Activated T-helper 2 cell treated with anti-CD3 and anti-CD28 coated beads, Interferon-gamma antibody, Interleukin-2, Interleukin-4, amounts not matched to agents 10 μg/mL and 5 μg/mL and 100 μg/mL, durations not matched to agents 14 hours and 24 hours and 36 hours (primary cell): ENCODE measurements at regions of chr14 and their contacts with region 1.

Region 1: DNA sequence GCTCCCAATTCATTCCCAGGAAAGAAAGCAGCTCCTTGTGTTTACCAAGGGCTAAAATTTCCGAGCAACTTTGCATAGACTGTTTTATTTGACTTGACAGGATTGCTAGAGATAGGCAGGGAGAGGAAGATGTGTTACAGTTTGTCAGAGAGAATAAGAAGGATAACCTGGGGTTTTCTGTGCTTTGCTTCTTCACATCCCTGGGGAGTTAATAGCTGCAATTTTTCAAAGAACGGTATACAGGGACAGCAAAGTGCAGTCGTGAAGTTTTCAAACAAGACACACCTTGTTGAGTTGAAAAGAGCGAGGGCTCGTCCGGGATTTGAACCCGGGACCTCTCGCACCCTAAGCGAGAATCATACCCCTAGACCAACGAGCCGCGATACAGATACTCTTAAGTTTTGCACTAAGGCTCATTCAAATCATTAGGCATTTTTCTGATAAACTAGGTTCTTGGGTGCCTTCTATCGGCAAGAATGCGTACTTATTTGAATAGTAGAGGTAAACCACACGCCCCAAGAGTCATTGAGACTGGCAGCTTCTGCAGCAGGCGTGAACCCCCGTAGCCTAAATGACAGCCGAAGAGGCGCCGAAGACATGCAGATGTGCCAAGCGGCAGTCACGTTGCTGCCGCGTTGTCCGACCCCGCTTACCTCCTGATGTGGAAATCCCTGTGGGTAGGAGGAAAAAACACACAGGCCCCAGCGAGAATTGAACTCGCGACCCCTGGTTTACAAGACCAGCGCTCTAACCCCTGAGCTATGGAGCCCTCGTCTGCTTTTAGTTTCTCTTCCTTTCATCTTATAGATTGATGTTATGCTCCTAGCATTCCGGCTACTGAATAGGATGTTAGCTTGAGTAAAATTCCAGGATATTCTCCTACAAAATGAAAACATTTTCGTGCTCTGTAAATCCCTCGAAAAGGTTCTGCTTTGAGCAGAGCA is 22.2 kb upstream of the RNASE12 start:
- DNase-seq: peak; percentile 83
- H3K4me3 Mint-ChIP-seq: no peak overlapping the region
- H3K27ac Mint-ChIP-seq: no peak overlapping the region
- H3K4me1 Mint-ChIP-seq: peaks cover 14% of the 10 kb centered on the region
- H3K27me3 Mint-ChIP-seq: peaks cover 2% of the 10 kb centered on the region

Region 2: DNA sequence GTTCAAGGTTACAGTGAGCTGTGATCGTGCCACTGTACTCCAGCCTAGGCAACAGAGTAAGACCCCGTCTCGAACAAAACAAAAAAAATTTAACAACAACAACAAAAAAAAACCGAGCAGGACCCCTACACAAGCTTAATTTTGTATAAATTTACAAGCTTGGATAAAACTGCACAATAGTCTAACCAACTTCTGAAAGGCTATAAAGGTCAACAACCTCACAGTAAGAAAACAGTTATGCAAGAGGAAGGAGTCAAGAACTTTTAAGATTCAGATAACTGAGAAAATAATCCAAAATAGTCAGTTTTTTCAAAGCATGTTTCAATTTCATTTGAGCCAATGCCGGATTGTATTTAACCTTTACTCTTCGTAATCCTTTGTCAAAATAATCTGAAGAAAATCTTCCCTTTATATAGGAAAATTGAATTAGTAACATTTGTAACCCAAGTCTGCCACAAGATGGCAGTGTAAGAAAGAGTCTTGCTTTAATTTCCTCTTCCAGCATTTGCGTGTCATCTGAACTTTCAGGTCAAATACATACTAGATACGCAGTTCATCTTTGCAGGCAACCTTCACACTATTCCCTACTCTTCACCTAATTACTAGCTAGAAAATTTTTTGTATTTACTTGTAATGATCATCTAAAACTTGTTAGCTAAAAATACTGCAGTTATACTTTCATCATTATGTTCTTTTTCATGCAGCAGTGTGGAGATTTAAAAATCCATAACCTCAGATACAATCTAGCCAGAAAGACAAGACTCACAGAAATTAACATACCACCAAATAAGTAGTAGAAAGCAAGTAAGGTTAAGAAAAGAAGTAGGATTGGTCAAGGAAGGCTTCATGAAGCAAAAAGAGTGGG is 286.1 kb before region 1 on chr14:
- intact Hi-C with region 1: loop called (anchors 1 kb)
- DNase-seq: no peak
- H3K4me3 Mint-ChIP-seq: peak overlapping the region; percentile 5
- H3K27ac Mint-ChIP-seq: peak overlapping the region; percentile 44
- H3K4me1 Mint-ChIP-seq: peaks cover 39% of the 10 kb centered on the region
- H3K27me3 Mint-ChIP-seq: no peaks in the 10 kb centered on the region

Region 3: GRCh38 chr14:20343092-20343861 is 270.1 kb before region 1 on chr14 and contains the start of gene PARP2:
- intact Hi-C with region 1: loop called (anchors 1 kb)
- DNase-seq: peak; percentile 94
- H3K4me3 Mint-ChIP-seq: peak within 1 kb of the TSS; percentile 98
- H3K27ac Mint-ChIP-seq: peak within 1 kb of the TSS; percentile 94
- H3K4me1 Mint-ChIP-seq: peaks cover 13% of the 10 kb centered on the region
- H3K27me3 Mint-ChIP-seq: peaks cover 3% of the 10 kb centered on the region
- total RNA-seq, gene PARP2: 31.2 and 31.5 TPM in 2 replicates

Region 4: DNA sequence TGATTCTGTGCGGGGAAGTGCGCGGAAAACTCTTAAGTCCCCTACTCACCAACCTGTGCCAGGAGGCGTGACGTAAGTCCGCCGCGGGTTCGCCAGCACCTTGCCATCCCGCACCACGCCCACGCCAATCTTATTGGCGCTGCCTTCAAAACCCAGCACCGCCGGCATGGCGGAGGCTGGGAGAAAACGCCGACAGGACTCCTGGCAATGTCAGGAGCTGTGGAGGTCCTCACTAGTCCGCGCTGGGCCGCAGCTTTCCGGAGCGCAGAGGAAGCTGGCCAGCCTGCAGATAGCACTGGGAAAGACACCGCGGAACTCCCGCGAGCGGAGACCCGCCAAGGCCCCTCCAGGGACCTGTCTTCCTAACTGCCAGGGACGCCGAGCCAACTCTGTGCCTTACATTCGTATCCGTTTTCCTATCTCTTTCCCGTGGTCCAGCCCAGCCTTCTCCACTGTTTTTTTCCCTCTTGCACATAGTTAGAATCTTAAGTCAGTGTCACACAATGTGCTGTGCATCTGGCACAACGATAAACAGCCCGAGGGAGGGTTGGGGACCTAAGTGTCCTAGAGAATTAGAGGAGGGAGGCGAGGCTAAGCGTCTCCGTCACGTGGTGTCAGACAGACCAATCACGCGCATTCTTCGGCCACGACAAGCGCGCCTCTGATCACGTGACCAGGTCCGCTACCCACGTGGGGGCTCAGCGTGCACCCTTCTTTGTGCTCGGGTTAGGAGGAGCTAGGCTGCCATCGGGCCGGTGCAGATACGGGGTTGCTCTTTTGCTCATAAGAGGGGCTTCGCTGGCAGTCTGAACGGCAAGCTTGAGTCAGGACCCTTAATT is 158.6 kb before region 1 on chr14 and contains the starts of genes APEX1 and OSGEP:
- intact Hi-C with region 1: loop called (anchors 2 kb)
- DNase-seq: peak; percentile 97
- H3K4me3 Mint-ChIP-seq: peak within 1 kb of the TSS; percentile 63
- H3K27ac Mint-ChIP-seq: no peak within 1 kb of the TSS
- H3K4me1 Mint-ChIP-seq: peaks cover 11% of the 10 kb centered on the region
- H3K27me3 Mint-ChIP-seq: no peaks in the 10 kb centered on the region
- total RNA-seq, gene APEX1: 217 and 228 TPM in 2 replicates
- total RNA-seq, gene OSGEP: 66.0 and 66.5 TPM in 2 replicates

Region 5: DNA sequence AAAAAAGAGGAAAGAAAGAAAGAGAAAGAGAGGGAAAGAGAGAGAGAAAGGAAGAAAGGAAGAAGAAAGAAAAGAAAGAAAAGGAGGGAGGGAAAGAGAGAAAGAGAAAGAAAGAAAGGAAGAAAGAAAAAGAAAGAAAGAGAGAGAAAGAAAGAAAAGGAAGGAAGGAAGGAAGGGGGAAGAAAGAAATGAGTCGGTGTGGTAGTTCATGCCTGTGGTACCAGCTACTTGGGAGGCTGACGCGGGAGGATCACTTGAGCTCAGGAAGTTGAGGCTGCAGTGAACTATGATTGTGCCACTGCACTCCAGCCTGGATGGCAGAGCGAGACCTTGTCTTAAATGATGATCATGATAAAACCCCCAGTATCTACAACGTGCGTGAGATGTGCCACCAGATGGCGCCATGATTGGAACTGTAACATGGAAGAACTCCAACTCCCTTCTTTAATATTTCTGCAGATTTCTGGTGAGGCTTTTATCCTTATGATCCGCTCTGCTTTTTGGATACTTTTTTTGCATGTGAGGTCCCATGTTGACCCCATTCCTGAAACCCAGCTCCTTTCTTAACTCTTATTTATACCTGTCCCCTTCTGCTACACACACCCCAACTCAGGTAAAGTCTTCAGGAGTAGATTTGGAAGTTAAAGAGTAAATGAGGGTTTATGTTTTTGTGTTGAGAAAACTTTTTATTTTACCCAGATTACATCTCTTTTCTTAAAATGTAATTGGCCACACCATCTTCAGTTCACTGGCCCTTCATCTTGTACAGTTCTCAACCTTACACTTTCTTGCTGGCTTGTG is 82.4 kb before region 1 on chr14:
- intact Hi-C with region 1: loop called (anchors 1 kb)
- DNase-seq: peak; percentile 56
- H3K4me3 Mint-ChIP-seq: no peak overlapping the region
- H3K27ac Mint-ChIP-seq: no peak overlapping the region
- H3K4me1 Mint-ChIP-seq: peaks cover 8% of the 10 kb centered on the region
- H3K27me3 Mint-ChIP-seq: peaks cover 33% of the 10 kb centered on the region

Region 6: DNA sequence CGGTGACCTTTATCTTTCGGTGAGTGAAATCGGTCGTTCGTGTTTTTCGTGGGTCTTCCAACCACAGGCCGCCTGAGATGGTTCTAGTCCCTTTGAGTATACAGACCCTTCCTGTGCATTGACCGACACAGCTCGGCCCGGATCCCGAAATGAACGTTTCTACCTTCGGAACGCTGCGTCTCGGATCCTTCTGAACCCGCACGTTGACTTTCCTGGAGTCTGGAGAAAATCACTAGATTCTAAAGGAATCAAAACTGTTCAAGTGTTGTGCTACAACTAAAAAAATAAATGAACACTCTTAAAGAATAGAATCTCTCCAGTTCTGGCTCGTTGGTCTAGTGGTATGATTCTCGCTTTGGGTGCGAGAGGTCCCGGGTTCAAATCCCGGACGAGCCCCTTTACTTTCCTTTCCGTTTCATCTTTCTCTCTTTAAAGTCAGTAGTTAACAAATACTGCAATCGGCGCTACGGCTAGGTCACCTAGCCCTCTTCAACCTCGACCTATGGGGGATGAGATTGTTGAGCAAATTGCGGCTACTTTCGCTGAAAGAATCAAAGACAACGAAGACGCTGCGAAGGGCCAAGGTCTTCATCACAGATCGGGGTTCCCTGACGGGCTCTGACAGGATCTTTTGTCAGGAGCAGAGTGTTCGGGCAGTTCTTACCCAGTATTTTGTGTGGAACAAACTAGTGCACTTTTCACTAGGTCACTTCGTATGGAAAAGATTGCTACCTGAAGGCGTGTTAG is 19.5 kb after region 1 on chr14:
- intact Hi-C with region 1: loop called (anchors 1 kb)
- DNase-seq: peak; percentile 63
- H3K4me3 Mint-ChIP-seq: peak overlapping the region; percentile 75
- H3K27ac Mint-ChIP-seq: peak overlapping the region; percentile 72
- H3K4me1 Mint-ChIP-seq: peaks cover 35% of the 10 kb centered on the region
- H3K27me3 Mint-ChIP-seq: peaks cover 63% of the 10 kb centered on the region

Region 7: GRCh38 chr14:20682435-20683124 is 69.2 kb after region 1 on chr14:
- intact Hi-C with region 1: loop called (anchors 1 kb)
- DNase-seq: peak; percentile 68
- H3K4me3 Mint-ChIP-seq: no peak overlapping the region
- H3K27ac Mint-ChIP-seq: no peak overlapping the region
- H3K4me1 Mint-ChIP-seq: peaks cover 26% of the 10 kb centered on the region
- H3K27me3 Mint-ChIP-seq: peaks cover 2% of the 10 kb centered on the region

Region 8: GRCh38 chr14:20757965-20758364 is 144.6 kb after region 1 on chr14:
- intact Hi-C with region 1: no loop called
- DNase-seq: no peak
- H3K4me3 Mint-ChIP-seq: no peak overlapping the region
- H3K27ac Mint-ChIP-seq: no peak overlapping the region
- H3K4me1 Mint-ChIP-seq: no peaks in the 10 kb centered on the region
- H3K27me3 Mint-ChIP-seq: no peaks in the 10 kb centered on the region